ENCODE measurements at regions of chr12 and their contacts with region 1.

Region 1: GRCh38 chr12:120317224-120318105 is 10.1 kb downstream of the PLA2G1B start:
- DNase-seq: peak; percentile 91
- H3K4me3 ChIP-seq: peak overlapping the region; percentile 85
- CTCF ChIP-seq: peak; percentile 53

Region 2: GRCh38 chr12:120041386-120042231 is 275.9 kb before region 1 on chr12:
- CTCF ChIA-PET with region 1: no interaction called
- POLR2A ChIA-PET with region 1: no interaction called
- DNase-seq: no peak
- H3K4me3 ChIP-seq: no peak overlapping the region
- CTCF ChIP-seq: no peak

Region 3: GRCh38 chr12:120301962-120302815 is 15.3 kb before region 1 on chr12 and contains the start of gene SIRT4:
- CTCF ChIA-PET with region 1: interaction called, 98 read pairs
- POLR2A ChIA-PET with region 1: interaction called, 6 read pairs
- DNase-seq: peak; percentile 65
- H3K4me3 ChIP-seq: peak within 1 kb of the TSS; percentile 77
- CTCF ChIP-seq: peak; percentile 71

Region 4: GRCh38 chr12:120327593-120327992 is 10.1 kb after region 1 on chr12 and contains the start of gene PLA2G1B:
- CTCF ChIA-PET with region 1: interaction called, 17 read pairs
- POLR2A ChIA-PET with region 1: no interaction called
- DNase-seq: no peak
- H3K4me3 ChIP-seq: no peak within 1 kb of the TSS
- CTCF ChIP-seq: no peak

Region 5: GRCh38 chr12:120457133-120457532 is 139.7 kb after region 1 on chr12:
- CTCF ChIA-PET with region 1: no interaction called
- POLR2A ChIA-PET with region 1: no interaction called
- DNase-seq: no peak
- H3K4me3 ChIP-seq: no peak overlapping the region
- CTCF ChIP-seq: peak; percentile 19

Region 6: GRCh38 chr12:120474444-120474943 is 157.0 kb after region 1 on chr12:
- CTCF ChIA-PET with region 1: no interaction called
- POLR2A ChIA-PET with region 1: no interaction called
- DNase-seq: no peak
- H3K4me3 ChIP-seq: no peak overlapping the region
- CTCF ChIP-seq: no peak

Measured in AG04449 (cell line).